AG04450 (cell line): ENCODE measurements at regions of chr12 and their contacts with region 1.

Region 1: DNA sequence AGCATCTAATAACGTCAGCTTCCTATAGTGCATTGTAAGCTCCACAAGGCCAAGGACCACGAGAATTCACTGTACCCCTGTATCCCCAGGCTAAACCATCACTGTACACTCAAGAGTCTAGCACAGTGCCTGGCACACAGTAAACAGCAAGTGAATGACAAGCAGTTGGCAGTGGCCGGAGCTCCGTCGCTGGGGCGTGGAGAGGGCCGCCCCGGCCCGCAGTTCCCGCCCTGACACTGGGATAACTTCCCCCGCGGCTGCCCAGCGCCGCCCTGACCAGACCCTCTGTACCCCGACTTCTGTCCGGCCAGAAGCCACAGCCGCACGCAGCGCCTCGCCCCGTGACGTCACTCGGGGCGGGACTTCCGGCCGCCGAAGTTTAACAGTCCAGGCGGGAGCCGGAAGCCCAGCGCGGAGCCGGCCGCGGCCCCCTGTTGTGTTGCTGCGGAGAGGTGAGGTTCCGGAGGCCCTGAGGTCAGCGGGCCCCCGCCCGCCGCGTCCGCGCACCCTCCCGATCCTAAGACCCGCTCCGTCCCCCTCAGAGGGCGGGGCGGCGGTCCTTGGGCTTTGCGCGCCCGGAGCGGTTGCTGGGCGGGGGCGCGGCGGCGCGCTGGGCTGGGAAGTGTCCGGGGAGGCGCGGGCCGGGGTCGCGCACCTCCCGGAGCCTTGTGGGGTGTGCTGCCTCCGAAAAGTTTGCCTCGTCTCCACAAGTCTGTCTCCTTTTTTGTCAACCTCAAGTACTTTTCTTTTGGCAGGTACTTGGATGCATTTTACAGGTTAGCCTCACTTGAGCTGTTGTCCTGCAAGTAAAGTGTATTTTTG is at the start of gene NEDD1:
- DNase-seq: peak; percentile 20
- H3K4me3 ChIP-seq: peak within 1 kb of the TSS; percentile 92
- H3K27ac ChIP-seq: peak within 1 kb of the TSS; percentile 83
- H3K27me3 ChIP-seq: no peaks in the 10 kb centered on the region
- CTCF ChIP-seq: no peak
- polyA plus RNA-seq, gene NEDD1: 23.7 and 30.5 TPM in 2 replicates

Region 2: DNA sequence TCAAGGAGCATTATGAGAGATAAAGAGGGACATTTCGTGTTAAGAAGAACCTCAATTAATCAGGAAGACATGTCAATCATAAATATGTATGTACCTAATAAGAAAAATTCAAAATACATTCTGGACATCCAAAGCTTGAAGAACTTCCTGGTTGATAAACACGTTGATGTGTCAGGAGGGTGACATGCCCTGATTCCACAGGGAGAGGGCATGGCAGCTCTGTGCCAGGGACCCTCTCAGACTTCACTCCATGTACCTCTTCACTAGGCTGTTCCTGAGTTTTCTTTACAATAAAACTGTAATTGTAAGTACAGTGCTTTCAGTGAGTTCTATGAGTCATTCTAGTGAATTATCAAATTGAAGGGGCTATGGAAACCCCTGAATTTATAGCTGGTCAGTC is 254.2 kb before region 1 on chr12:
- CTCF ChIA-PET with region 1: interaction called, 14 read pairs
- POLR2A ChIA-PET with region 1: no interaction called
- DNase-seq: no peak
- H3K4me3 ChIP-seq: no peak overlapping the region
- H3K27ac ChIP-seq: no peak overlapping the region
- H3K27me3 ChIP-seq: no peaks in the 10 kb centered on the region
- CTCF ChIP-seq: no peak

Region 3: DNA sequence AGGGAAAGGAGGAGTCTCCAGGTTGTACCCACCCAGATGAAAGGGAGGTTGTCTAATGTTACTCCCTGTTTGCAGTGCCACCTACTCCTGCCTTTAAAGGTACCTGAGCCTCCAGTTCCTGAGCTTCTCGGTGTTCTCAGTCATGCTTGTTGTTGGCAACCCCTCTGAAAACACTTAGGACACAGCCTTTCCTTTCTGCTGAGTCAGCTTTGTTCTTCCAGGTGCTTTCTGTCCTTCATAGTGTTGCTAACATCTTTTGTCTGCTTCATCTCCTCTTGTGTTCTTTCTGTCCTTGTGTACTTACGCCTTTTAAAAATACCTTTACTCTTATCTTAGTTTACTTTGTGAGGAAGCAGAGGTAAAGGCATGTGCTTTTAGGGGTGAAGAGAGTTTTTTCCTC is 97.0 kb before region 1 on chr12:
- CTCF ChIA-PET with region 1: no interaction called
- POLR2A ChIA-PET with region 1: no interaction called
- DNase-seq: no peak
- H3K4me3 ChIP-seq: no peak overlapping the region
- H3K27ac ChIP-seq: no peak overlapping the region
- H3K27me3 ChIP-seq: no peaks in the 10 kb centered on the region
- CTCF ChIP-seq: no peak